ENCODE measurements at regions of chr17 and their contacts with region 1.

Region 1: GRCh38 chr17:64975329-64976087 is 56.2 kb upstream of the LRRC37A3 start:
- DNase-seq: peak; percentile 96 to 98
- ATAC-seq: peak; percentile 95 to 97 (median 96)
- H3K4me3 ChIP-seq: peak overlapping the region; percentile 81
- H3K27ac ChIP-seq: peak overlapping the region; percentile 99
- H3K4me1 ChIP-seq: peaks cover 4% of the 10 kb centered on the region
- H3K27me3 ChIP-seq: no peaks in the 10 kb centered on the region
- CTCF ChIP-seq: no peak

Region 2: GRCh38 chr17:65100316-65101140 is 125.0 kb after region 1 on chr17:
- intact Hi-C with region 1: loop called in 1 of 2 experiments (anchors 5 kb)
- DNase-seq: peak; percentile 87 to 94
- ATAC-seq: peak; percentile 93 to 95 (median 94)
- H3K4me3 ChIP-seq: peak overlapping the region; percentile 74
- H3K27ac ChIP-seq: peak overlapping the region; percentile 76
- H3K4me1 ChIP-seq: peaks cover 17% of the 10 kb centered on the region
- H3K27me3 ChIP-seq: no peaks in the 10 kb centered on the region
- CTCF ChIP-seq: peak; percentile 78

Measured in psoas muscle (tissue), 8 donors.